ENCODE measurements at regions of chr2 and their contacts with region 1.

Region 1: DNA sequence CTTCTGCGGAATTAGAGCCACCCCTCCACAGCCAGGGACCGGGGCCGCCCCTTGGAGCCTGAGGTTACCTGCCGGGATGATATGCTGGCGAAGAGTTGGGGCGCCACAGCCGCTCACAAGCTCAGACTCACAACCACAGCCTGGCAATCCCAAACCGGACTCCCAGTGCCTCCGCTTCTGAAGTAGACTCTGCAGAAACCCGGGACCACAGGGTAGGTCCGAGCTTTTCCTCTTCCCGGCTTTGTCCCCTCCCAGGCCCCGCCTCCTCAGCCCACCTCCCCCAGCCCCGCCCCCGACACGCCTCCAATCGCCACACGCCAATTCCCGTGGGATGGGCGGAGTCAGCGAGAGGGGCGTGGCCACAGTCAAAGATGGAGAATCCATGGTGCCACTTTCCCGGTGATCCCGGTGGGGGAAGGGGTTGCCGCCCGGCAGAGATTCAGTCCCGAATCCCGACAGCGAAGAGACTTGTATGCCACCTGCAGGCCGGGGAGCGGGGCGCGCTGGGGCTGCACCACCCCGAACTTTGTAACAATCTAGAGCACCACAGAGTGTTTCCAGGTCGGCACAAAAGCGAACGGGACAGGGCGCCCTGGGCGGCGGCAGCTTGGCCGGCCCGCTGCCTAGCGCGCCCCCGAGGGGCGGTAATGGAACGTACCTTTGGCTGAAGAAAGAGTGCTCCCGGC is at the start of gene IDH1:
- DNase-seq: peak; percentile 94
- ATAC-seq: peak; percentile 81
- H3K4me3 ChIP-seq: peak within 1 kb of the TSS; percentile 85 to 100 (median 100)
- H3K27ac ChIP-seq: peak within 1 kb of the TSS; percentile 97
- H3K4me1 ChIP-seq: peaks cover 65% of the 10 kb centered on the region
- H3K27me3 ChIP-seq: no peaks in the 10 kb centered on the region; a peak in 2 of 5 replicates
- CTCF ChIP-seq: peak; percentile 84
- EP300 ChIP-seq: 0 out of 4 replicates have a peak, but pooled peaks of 1 of the 2 experiments have one; percentile 18
- POLR2A ChIP-seq: peak; percentile 86 to 99
- RAD21 ChIP-seq: peak; percentile 84
- total RNA-seq, gene IDH1: 1,077 and 1,654 TPM in 2 replicates

Region 2: DNA sequence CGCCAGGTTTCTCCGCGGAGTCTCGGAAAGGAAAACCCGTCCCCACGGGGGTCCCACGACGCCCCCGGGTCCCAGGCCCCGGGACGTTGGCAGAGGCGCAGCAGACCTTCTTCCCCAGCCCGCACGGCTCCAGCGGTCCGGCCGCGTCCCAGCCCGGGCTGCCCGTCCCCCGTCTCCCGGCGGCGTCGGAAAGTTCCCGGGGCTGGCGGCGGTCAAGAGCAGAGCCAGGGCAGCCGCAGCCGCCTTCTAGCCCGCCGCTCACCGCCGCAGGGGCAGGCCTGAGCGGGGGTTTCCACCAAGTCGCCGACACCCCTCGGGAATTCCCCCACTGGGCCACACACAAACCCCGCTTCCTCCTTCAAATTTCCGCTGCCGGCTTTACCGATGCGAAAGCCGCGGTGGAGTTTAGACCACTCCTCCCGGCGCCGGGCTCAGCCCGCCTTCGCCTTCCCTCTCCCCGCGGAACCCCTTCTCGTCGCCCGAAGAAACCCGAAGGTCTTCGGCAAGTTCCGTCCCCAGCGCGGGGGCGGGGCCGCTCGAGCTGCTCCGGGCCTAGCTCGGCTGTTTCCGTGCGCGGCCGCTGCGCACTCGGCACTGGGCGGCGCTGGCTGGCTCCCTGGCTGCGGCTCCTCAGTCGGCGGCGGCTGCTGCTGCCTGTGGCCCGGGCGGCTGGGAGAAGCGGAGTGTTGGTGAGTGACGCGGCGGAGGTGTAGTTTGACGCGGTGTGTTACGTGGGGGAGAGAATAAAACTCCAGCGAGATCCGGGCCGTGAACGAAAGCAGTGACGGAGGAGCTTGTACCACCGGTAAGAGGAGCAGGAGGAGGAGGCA is 725.5 kb before region 1 on chr2 and contains the start of gene CREB1:
- CTCF ChIA-PET with region 1: no interaction called
- POLR2A ChIA-PET with region 1: interaction called, 3 read pairs
- in situ Hi-C with region 1: no loop called
- intact Hi-C with region 1: loop called (anchors 1 kb)
- DNase-seq: peak; percentile 94
- ATAC-seq: peak; percentile 96
- H3K4me3 ChIP-seq: peak within 1 kb of the TSS; percentile 93 to 98 (median 94)
- H3K27ac ChIP-seq: peak within 1 kb of the TSS; percentile 96
- H3K4me1 ChIP-seq: peaks cover 44% of the 10 kb centered on the region
- H3K27me3 ChIP-seq: no peaks in the 10 kb centered on the region; a peak in 1 of 5 replicates
- CTCF ChIP-seq: peak; percentile 73
- EP300 ChIP-seq: no peak; a peak in 1 of 4 replicates
- POLR2A ChIP-seq: peak; percentile 90 to 94
- RAD21 ChIP-seq: peak; percentile 30
- total RNA-seq, gene CREB1: 51.9 and 79.5 TPM in 2 replicates

Region 3: GRCh38 chr2:208129744-208130711 is 125.0 kb before region 1 on chr2 and contains the start of gene CRYGC:
- CTCF ChIA-PET with region 1: no interaction called
- POLR2A ChIA-PET with region 1: interaction called, 11 read pairs
- in situ Hi-C with region 1: no loop called
- intact Hi-C with region 1: no loop called
- DNase-seq: peak; percentile 84
- ATAC-seq: peak; percentile 94
- H3K4me3 ChIP-seq: peak within 1 kb of the TSS; percentile 46 to 51 (median 46); a peak in 5 of 6 replicates
- H3K27ac ChIP-seq: peak within 1 kb of the TSS; percentile 71
- H3K4me1 ChIP-seq: peaks cover 33% of the 10 kb centered on the region
- H3K27me3 ChIP-seq: no peaks in the 10 kb centered on the region
- CTCF ChIP-seq: no peak
- EP300 ChIP-seq: peak in 1 of 2 experiments; percentile 34; a peak in 1 of 4 replicates
- POLR2A ChIP-seq: no peak
- RAD21 ChIP-seq: no peak
- total RNA-seq, gene CRYGC: 0.27 TPM in 1 of 2 replicates, not detected in the other

Region 4: GRCh38 chr2:208175069-208175839 is 79.8 kb before region 1 on chr2:
- CTCF ChIA-PET with region 1: interaction called, 9 read pairs
- POLR2A ChIA-PET with region 1: interaction called, 10 read pairs
- in situ Hi-C with region 1: loop called (anchors 5 kb)
- intact Hi-C with region 1: loop called (anchors 1 kb)
- DNase-seq: peak; percentile 86
- ATAC-seq: peak; percentile 97
- H3K4me3 ChIP-seq: peak overlapping the region in 1 of 3 experiments; percentile 16; a peak in 1 of 6 replicates
- H3K27ac ChIP-seq: no peak overlapping the region
- H3K4me1 ChIP-seq: peaks cover 51% of the 10 kb centered on the region
- H3K27me3 ChIP-seq: peaks cover 0 to 9% of the 10 kb centered on the region in 2 experiments; a peak in 2 of 5 replicates
- CTCF ChIP-seq: peak; percentile 92
- EP300 ChIP-seq: no peak; a peak in 1 of 4 replicates
- POLR2A ChIP-seq: no peak
- RAD21 ChIP-seq: peak; percentile 83

Region 5: DNA sequence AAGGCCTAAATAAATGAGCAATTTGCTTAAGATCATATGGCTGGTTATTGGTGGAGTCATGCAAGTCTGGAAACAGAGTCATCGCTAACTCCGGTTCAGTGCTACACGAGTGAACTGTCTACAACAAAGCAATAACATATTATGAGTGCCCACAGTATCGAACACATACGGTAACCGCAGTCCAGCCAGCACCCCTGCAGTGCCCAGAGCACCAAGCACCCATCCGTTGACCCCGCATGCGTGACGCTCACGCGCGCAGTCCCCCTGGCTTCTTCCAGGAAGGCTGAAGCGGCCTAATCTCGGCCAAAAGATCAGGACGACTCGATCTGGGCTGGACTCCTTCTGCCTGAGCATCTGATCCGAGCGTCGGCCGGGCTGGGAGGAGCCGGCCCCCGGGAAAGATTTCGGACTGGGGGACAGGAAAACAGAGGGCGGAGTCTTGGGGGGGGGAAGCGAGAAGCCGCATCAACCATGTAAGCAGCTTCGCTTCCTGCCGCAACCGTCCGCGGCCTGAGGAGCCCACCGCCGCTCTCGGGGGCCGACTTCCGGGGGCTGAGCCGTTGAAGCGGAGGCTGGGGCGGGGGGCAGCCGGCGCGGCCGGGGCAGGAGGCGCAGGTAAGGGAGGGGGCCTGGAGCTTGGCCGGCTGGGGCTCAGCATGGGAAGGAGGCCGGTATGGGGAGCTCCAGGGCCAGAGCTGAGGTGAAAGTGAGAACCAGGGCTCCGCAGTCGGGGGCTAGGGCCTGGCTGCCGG is 11.0 kb after region 1 on chr2 and contains the start of gene PIKFYVE:
- CTCF ChIA-PET with region 1: interaction called, 6 read pairs
- POLR2A ChIA-PET with region 1: interaction called, 145 read pairs
- in situ Hi-C with region 1: no loop called
- intact Hi-C with region 1: loop called (anchors 1 kb)
- DNase-seq: peak; percentile 99
- ATAC-seq: peak; percentile 94
- H3K4me3 ChIP-seq: peak within 1 kb of the TSS; percentile 71 to 87 (median 86)
- H3K27ac ChIP-seq: peak within 1 kb of the TSS; percentile 79
- H3K4me1 ChIP-seq: peaks cover 45% of the 10 kb centered on the region
- H3K27me3 ChIP-seq: no peaks in the 10 kb centered on the region; a peak in 1 of 5 replicates
- CTCF ChIP-seq: 0 out of 2 replicates have a peak, but pooled peaks have one; percentile 40
- EP300 ChIP-seq: peak; percentile 34 to 81; a peak in 2 of 4 replicates
- POLR2A ChIP-seq: peak; percentile 62 to 76; a peak in 3 of 4 replicates
- RAD21 ChIP-seq: 0 out of 2 replicates have a peak, but pooled peaks have one; percentile 12
- total RNA-seq, gene PIKFYVE: 21.7 and 24.4 TPM in 2 replicates

Measured in HepG2 (cell line).